ENCODE measurements at regions of chr13 and their contacts with region 1.

Region 1: DNA sequence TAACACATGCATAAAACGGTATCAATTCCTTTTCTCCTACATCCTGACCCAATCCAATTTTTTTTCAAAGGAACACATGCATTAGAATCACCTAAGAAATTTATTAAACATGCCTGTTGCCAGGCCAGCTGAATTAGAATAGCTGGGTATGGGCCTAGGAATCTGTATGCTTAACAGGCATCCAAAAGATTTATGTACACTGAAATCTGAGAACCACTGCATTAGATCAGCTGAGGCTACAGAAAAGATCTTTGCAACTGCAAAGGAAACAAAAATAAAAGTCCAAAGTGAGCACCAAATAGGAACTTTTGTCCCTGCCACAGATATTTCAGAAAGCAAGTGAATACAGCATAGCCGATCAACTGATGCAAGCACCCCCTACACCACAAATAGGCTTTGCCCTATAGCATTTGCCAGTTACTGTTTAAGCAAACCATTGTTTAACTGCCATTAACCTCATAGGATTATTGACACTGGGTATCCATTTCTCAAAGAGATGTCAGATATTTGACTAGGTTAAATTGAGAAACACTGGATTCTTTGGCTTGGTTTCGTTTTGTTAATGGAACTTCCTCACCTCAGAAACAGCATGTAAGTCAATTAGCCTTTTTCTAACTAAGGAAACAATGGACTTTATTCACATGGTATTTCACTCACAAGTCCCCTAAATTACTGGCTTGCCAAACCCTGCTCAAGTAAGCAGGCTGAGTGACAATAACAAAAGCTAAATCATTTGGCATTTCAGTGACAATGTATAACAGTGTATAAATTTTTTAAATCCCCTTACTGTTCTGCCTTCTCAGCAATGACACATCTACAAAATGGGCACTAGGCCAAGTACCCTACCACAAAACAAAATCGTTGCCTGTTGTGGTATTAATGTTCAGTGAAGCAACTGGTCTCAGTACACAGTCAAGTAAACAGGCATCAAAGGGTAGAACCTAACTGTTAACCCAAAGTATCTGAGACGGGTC is 67.8 kb downstream of the SUCLA2 start:
- DNase-seq: peak; percentile 25
- H3K4me3 ChIP-seq: no peak overlapping the region
- H3K27ac ChIP-seq: no peak overlapping the region
- H3K4me1 ChIP-seq: no peaks in the 10 kb centered on the region
- H3K27me3 ChIP-seq: no peaks in the 10 kb centered on the region
- CTCF ChIP-seq: no peak

Region 2: GRCh38 chr13:47816840-47817239 is 116.4 kb before region 1 on chr13:
- CTCF ChIA-PET with region 1: no interaction called
- dilution Hi-C with region 1: no loop called
- in situ Hi-C with region 1: no loop called
- intact Hi-C with region 1: loop called (anchors 10 kb)
- DNase-seq: no peak
- H3K4me3 ChIP-seq: no peak overlapping the region
- H3K27ac ChIP-seq: no peak overlapping the region
- H3K4me1 ChIP-seq: no peaks in the 10 kb centered on the region
- H3K27me3 ChIP-seq: no peaks in the 10 kb centered on the region
- CTCF ChIP-seq: no peak